ENCODE measurements at regions of chr9 and their contacts with region 1.

Region 1: DNA sequence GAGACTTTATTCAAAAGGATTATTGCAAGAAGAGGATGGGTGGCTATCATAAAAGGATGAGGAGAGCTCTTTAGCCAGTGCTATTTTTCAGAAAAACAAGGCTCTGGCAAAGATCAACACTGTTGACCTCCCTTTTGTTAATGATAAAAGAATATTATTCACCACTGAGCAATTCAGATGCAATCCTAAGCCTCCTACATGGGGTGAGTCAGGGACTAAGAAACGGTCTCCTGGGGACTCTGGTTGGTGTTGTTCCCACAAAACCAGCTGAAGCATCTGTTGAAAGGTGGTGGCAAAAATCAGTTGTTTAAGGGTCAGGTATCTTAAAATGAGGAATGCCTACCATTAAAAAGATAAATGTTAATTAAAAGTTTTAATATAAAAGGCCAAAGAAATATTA is 7.7 kb upstream of the GCNT1 start:
- DNase-seq: no peak
- H3K4me3 Mint-ChIP-seq: no peak overlapping the region
- H3K27ac Mint-ChIP-seq: no peak overlapping the region
- H3K4me1 Mint-ChIP-seq: no peaks in the 10 kb centered on the region
- H3K27me3 Mint-ChIP-seq: peaks cover 4% of the 10 kb centered on the region

Region 2: DNA sequence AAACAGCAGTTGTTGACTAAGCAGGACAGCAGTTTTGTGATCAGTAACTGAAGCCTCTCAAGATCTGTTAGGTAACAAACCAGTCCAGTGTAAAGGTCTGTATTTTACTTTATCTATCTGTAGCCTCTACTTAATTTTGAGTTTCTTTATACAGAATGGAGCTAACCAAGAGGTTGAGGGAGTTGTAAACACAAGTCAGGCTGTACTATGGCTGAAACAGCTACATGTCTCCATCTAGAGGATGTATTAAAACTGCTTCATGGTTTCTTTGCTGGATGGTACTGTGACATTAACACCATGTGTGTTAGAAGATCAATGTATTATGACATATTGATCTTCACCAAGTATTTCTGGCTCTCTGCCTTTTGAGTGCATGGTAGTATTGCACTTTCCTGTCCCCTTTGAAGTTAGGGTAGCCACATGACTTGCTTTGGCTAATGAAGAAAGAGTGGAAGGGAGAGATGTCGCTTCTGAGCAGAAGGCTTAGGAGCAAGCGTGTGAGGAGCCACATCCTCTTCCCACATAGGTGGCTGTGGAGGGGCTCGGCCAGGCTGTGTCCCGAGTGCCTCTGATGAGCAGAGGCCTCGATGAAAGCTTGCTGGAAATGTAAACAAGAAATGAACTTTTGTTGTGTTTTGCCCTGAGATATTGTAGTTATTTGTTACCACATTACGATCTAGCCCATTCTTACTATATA is 207.4 kb after region 1 on chr9:
- CTCF ChIA-PET with region 1: interaction called, 6 read pairs
- intact Hi-C with region 1: loop called (anchors 1 kb)
- DNase-seq: no peak
- H3K4me3 Mint-ChIP-seq: no peak overlapping the region
- H3K27ac Mint-ChIP-seq: no peak overlapping the region
- H3K4me1 Mint-ChIP-seq: peaks cover 5% of the 10 kb centered on the region
- H3K27me3 Mint-ChIP-seq: peaks cover 3% of the 10 kb centered on the region

Region 3: GRCh38 chr9:76704593-76705204 is 253.5 kb after region 1 on chr9:
- CTCF ChIA-PET with region 1: interaction called, 5 read pairs
- intact Hi-C with region 1: loop called (anchors 1 kb)
- DNase-seq: no peak
- H3K4me3 Mint-ChIP-seq: no peak overlapping the region
- H3K27ac Mint-ChIP-seq: no peak overlapping the region
- H3K4me1 Mint-ChIP-seq: no peaks in the 10 kb centered on the region
- H3K27me3 Mint-ChIP-seq: peaks cover 41% of the 10 kb centered on the region

Region 4: GRCh38 chr9:76987594-76988200 is 536.5 kb after region 1 on chr9:
- CTCF ChIA-PET with region 1: no interaction called
- intact Hi-C with region 1: loop called (anchors 1 kb)
- DNase-seq: peak; percentile 29
- H3K4me3 Mint-ChIP-seq: no peak overlapping the region
- H3K27ac Mint-ChIP-seq: no peak overlapping the region
- H3K4me1 Mint-ChIP-seq: no peaks in the 10 kb centered on the region
- H3K27me3 Mint-ChIP-seq: peaks cover 4% of the 10 kb centered on the region

Region 5: DNA sequence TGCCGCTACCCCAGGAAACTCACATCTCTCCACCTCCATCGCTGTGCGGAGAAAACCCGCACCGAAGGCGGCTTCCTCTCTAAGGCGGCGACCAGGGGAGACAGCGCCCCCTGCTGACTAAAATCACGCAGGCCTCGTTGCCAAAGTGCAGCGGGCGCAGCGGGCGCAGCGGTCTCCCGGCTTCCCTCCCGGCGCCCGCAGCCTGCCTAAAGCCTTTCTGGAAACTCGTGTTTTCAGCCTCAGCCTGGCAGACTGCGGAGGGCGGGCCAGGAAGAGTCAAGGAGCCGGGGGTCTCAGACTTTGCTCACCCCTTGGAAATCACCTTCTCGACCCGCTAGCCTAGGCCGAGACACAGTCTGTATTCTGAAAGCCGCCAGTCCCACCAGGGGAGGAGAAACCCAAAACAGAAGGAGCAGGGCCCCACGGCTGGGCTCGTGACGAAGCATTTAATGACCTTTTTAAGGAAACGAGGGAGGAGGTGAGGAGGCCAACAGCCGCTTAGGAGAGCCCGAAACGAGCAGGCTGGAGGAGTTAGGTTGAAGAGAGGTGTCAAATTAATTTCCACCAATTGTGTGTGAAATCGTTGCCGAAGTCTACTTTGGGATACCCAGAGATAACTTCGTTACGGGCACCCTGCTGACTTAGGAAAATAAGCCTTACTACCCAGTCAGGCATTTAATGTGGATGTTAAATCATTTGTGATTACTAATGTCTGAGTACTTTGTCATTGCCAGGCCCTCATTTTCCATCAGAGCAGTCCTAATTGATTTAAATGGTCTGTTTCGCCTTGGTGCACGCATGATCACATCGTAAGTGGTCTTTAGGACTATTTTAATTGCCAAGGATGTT is 561.0 kb after region 1 on chr9:
- CTCF ChIA-PET with region 1: no interaction called
- intact Hi-C with region 1: loop called (anchors 1 kb)
- DNase-seq: peak; percentile 84
- H3K4me3 Mint-ChIP-seq: peak overlapping the region; percentile 36
- H3K27ac Mint-ChIP-seq: no peak overlapping the region
- H3K4me1 Mint-ChIP-seq: peaks cover 16% of the 10 kb centered on the region
- H3K27me3 Mint-ChIP-seq: peaks cover 69% of the 10 kb centered on the region

Measured in activated naive CD4-positive, alpha-beta T cell treated with anti-CD3 and anti-CD28 coated beads for 36 hours (primary cell).